ENCODE measurements at regions of chr10 and their contacts with region 1.

Region 1: GRCh38 chr10:93554760-93555432 is 11.6 kb upstream of the FFAR4 start:
- DNase-seq: peak; percentile 31
- ATAC-seq: no peak
- H3K4me3 Mint-ChIP-seq: no peak overlapping the region
- H3K27ac Mint-ChIP-seq: no peak overlapping the region
- H3K4me1 Mint-ChIP-seq: no peaks in the 10 kb centered on the region
- H3K27me3 Mint-ChIP-seq: peaks cover 2% of the 10 kb centered on the region
- CTCF ChIP-seq: no peak

Region 2: DNA sequence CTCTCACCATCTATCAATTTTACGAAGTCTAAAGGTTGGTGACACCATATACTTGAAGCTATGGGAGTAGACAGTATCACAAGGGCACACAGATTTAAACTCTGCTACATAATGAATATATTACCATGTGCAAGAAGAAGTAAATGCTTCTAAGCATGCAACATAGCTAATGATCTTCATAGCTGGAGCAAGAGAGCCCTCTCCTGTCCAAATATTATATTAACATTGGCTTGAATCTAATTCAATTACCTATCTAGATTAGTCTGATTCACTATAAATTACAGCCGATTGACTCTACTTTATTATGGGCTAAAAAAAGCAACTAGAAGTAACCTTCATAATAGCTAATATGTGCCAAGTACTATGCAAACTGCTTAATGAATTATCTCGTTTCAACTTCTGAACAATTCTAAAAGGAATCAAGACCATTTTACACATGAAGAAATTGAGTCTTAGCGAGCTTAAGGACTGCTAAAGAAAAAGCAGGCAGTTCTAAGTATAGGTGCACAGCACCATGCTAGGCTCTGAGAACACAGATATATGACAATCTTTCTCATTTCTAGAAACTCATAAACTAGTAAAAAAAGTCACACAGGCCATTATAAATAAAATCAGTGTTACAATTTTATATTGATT is 125.6 kb after region 1 on chr10:
- CTCF ChIA-PET with region 1: interaction called, 9 read pairs
- POLR2A ChIA-PET with region 1: interaction called, 10 read pairs
- intact Hi-C with region 1: loop called (anchors 1 kb)
- DNase-seq: no peak
- ATAC-seq: no peak
- H3K4me3 Mint-ChIP-seq: no peak overlapping the region
- H3K27ac Mint-ChIP-seq: no peak overlapping the region
- H3K4me1 Mint-ChIP-seq: no peaks in the 10 kb centered on the region
- H3K27me3 Mint-ChIP-seq: no peaks in the 10 kb centered on the region
- CTCF ChIP-seq: no peak

Region 3: DNA sequence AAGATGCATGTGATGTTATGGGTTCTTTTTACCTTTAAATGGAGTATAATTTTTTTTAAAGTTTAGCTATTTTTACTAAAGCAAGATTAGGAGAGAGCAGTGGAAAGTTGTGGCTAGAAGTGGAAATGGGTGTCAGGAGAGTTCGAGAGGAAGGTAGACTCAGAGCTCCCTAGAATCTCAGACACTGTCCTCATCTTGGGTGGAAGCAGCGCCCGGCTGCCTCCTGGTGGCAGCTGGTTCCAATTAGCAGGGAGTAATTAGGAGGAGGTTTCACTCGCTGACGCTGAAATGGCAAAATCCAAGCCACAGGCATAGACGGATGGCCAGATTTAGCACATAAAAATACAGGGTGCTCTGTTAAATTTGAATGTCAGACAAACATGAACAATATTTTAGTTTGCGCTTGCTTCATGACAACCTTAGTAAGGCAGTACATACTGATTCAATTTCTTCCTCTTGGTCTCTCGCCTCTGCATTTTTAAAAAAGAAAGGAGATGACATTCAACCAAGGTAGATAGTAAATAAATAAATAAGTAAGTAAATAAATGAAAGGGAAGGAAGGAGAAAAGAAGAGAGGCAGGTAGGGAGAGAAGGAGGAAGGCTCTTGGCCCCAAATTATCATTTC is 261.3 kb after region 1 on chr10:
- CTCF ChIA-PET with region 1: interaction called, 12 read pairs
- POLR2A ChIA-PET with region 1: no interaction called
- intact Hi-C with region 1: loop called (anchors 1 kb)
- DNase-seq: no peak
- ATAC-seq: peak; percentile 45
- H3K4me3 Mint-ChIP-seq: no peak overlapping the region
- H3K27ac Mint-ChIP-seq: no peak overlapping the region
- H3K4me1 Mint-ChIP-seq: no peaks in the 10 kb centered on the region
- H3K27me3 Mint-ChIP-seq: peaks cover 38% of the 10 kb centered on the region
- CTCF ChIP-seq: no peak

Region 4: DNA sequence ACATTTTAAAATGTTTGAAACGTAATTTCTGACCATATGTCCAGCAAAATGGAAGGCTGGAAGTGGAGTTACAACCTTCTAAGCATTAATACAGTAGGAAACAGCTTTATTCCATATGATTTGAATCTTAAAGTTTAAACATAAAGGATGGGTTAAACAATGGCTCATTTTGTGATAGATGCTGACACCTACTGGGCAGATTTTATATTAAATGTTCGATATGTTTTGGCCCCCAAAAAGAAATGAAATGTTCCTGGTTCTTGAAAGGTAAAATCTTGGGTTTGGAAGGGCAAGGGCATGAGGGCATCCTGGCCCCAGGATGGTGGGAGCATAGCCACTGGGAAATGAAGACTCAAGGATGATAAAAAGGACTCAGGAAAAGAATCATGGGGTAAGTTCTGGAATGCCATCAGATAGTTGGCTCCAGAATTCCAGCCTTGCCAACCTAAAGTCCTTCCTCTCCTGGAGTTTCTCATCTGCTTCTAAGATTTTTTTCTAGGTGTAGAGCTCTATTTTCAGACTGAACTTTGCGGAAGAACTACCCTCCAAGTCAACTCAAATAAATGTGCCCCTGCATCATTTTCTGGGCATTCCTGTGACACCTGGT is 304.3 kb after region 1 on chr10:
- CTCF ChIA-PET with region 1: interaction called, 33 read pairs
- POLR2A ChIA-PET with region 1: no interaction called
- intact Hi-C with region 1: no loop called
- DNase-seq: no peak
- ATAC-seq: no peak
- H3K4me3 Mint-ChIP-seq: no peak overlapping the region
- H3K27ac Mint-ChIP-seq: no peak overlapping the region
- H3K4me1 Mint-ChIP-seq: no peaks in the 10 kb centered on the region
- H3K27me3 Mint-ChIP-seq: peaks cover 5% of the 10 kb centered on the region
- CTCF ChIP-seq: no peak

Region 5: GRCh38 chr10:93947055-93947454 is 392.2 kb after region 1 on chr10:
- CTCF ChIA-PET with region 1: no interaction called
- POLR2A ChIA-PET with region 1: no interaction called
- intact Hi-C with region 1: no loop called
- DNase-seq: no peak
- ATAC-seq: no peak
- H3K4me3 Mint-ChIP-seq: no peak overlapping the region
- H3K27ac Mint-ChIP-seq: no peak overlapping the region
- H3K4me1 Mint-ChIP-seq: no peaks in the 10 kb centered on the region
- H3K27me3 Mint-ChIP-seq: no peaks in the 10 kb centered on the region
- CTCF ChIP-seq: no peak

Measured in activated B cell treated with CpG ODN at 0.5 μM for 24 hours (primary cell).